BJ (cell line): ENCODE measurements at regions of chr6 and their contacts with region 1.

Region 1: DNA sequence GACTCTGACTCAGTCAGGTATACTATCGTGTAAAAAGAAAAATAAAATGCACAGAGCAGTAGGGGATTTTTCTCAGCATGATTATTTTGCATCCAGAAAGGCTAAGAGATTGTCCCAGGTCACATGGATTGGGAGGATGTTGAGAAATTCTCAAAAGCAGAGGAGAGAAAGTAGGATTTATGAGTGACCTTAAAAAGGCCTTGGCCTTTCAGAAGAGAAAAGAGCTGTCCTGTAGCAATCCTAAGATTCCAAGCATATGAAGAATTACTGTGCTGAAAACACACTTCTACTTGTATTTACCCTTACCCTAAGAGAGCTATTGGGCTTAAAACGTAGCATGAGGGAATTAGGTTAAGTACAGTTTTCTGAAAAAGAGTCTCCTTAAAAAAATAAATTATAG is 149.7 kb upstream of the ENPP5 start:
- DNase-seq: peak; percentile 31
- H3K4me3 ChIP-seq: no peak overlapping the region
- H3K27me3 ChIP-seq: no peaks in the 10 kb centered on the region
- CTCF ChIP-seq: no peak

Region 2: GRCh38 chr6:47483853-47484546 is 1163.5 kb after region 1 on chr6:
- CTCF ChIA-PET with region 1: no interaction called
- POLR2A ChIA-PET with region 1: interaction called, 14 read pairs
- DNase-seq: no peak
- H3K4me3 ChIP-seq: no peak overlapping the region
- H3K27me3 ChIP-seq: no peaks in the 10 kb centered on the region
- CTCF ChIP-seq: no peak